MCF 10A (cell line): ENCODE measurements at regions of chr12 and their contacts with region 1.

Region 1: DNA sequence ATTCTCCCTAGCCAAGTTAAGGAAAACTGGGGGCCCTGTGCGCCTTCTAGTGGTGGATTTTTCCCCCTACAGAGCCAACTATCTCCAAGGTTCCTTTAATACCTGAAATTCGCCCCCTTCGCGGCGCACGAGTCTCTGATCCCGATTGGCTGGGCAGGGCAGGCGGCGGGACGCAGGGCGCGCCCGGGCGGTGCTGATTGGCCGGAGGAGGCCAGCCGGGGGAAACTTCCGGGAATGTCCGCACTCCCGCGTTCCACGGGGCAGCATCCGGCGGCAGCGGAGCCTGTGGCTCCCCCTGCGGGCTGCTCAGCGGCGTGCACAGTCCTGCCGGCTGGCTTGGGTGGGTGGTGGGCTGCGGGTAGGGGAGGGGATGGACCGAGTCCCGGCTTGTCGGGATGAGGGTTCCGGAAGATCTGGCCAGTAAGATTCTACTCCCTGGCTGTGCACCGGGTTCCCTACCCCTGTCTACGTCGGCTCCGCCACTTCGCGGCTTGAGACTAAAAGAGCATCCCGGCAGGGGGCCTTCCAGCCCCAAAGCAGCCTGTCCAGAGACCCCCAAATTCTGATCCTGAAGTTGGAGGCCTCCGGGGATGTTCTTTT is at the start of gene NABP2:
- DNase-seq: peak; percentile 98
- H3K4me3 Mint-ChIP-seq: peak within 1 kb of the TSS; percentile 82
- H3K27ac Mint-ChIP-seq: peak within 1 kb of the TSS; percentile 88
- H3K4me1 Mint-ChIP-seq: peaks cover 24% of the 10 kb centered on the region
- H3K27me3 Mint-ChIP-seq: no peaks in the 10 kb centered on the region
- CTCF ChIP-seq: peak; percentile 78
- total RNA-seq, gene NABP2: 53.3 and 56.2 TPM in 2 replicates

Region 2: DNA sequence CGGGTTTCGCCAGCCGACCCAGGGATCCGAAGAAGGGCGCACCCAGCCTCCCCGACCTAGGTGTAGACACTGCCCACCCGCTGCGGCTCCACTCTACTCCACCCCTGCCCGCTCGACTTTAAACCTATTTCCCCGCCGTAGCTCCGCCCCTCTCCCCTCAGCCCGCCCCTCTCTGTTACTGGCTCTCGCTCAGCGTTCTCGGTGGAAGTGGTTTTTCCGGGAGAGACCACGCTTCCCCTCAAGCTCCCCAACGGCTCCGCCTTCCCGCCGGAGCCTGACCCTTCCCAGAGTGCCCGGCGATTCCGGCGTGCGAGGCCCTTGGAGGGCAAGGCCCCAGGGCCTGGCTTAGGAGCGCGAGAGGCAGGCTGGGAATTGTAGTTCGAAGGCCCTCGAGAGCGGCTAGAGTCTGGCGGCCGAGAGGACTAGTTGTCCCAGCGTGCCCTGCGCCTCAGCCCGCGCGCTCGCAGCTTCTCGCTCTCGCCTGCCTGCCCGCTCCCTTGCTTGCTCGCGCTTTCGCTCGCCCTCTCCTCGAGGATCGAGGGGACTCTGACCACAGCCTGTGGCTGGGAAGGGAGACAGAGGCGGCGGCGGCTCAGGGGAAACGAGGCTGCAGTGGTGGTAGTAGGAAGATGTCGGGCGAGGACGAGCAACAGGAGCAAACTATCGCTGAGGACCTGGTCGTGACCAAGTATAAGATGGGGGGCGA is 119.9 kb before region 1 on chr12 and contains the start of gene PA2G4:
- CTCF ChIA-PET with region 1: interaction called, 5 read pairs
- POLR2A ChIA-PET with region 1: interaction called, 18 read pairs
- intact Hi-C with region 1: no loop called
- DNase-seq: peak; percentile 99
- H3K4me3 Mint-ChIP-seq: peak within 1 kb of the TSS; percentile 97
- H3K27ac Mint-ChIP-seq: peak within 1 kb of the TSS; percentile 95
- H3K4me1 Mint-ChIP-seq: peaks cover 9% of the 10 kb centered on the region
- H3K27me3 Mint-ChIP-seq: no peaks in the 10 kb centered on the region
- CTCF ChIP-seq: no peak
- total RNA-seq, gene PA2G4: 158 and 205 TPM in 2 replicates

Region 3: GRCh38 chr12:56158029-56158925 is 65.9 kb before region 1 on chr12 and contains the start of gene MYL6:
- CTCF ChIA-PET with region 1: interaction called, 3 read pairs
- POLR2A ChIA-PET with region 1: interaction called, 21 read pairs
- intact Hi-C with region 1: no loop called
- DNase-seq: peak; percentile 98
- H3K4me3 Mint-ChIP-seq: peak within 1 kb of the TSS; percentile 97
- H3K27ac Mint-ChIP-seq: peak within 1 kb of the TSS; percentile 100
- H3K4me1 Mint-ChIP-seq: peaks cover 35% of the 10 kb centered on the region
- H3K27me3 Mint-ChIP-seq: no peaks in the 10 kb centered on the region
- CTCF ChIP-seq: no peak
- total RNA-seq, gene MYL6: 716 and 997 TPM in 2 replicates

Region 4: GRCh38 chr12:56206457-56207166 is 17.6 kb before region 1 on chr12:
- CTCF ChIA-PET with region 1: interaction called, 36 read pairs
- POLR2A ChIA-PET with region 1: interaction called, 25 read pairs
- intact Hi-C with region 1: no loop called
- DNase-seq: peak; percentile 54
- H3K4me3 Mint-ChIP-seq: no peak overlapping the region
- H3K27ac Mint-ChIP-seq: no peak overlapping the region
- H3K4me1 Mint-ChIP-seq: peaks cover 5% of the 10 kb centered on the region
- H3K27me3 Mint-ChIP-seq: no peaks in the 10 kb centered on the region
- CTCF ChIP-seq: peak; percentile 28

Region 5: DNA sequence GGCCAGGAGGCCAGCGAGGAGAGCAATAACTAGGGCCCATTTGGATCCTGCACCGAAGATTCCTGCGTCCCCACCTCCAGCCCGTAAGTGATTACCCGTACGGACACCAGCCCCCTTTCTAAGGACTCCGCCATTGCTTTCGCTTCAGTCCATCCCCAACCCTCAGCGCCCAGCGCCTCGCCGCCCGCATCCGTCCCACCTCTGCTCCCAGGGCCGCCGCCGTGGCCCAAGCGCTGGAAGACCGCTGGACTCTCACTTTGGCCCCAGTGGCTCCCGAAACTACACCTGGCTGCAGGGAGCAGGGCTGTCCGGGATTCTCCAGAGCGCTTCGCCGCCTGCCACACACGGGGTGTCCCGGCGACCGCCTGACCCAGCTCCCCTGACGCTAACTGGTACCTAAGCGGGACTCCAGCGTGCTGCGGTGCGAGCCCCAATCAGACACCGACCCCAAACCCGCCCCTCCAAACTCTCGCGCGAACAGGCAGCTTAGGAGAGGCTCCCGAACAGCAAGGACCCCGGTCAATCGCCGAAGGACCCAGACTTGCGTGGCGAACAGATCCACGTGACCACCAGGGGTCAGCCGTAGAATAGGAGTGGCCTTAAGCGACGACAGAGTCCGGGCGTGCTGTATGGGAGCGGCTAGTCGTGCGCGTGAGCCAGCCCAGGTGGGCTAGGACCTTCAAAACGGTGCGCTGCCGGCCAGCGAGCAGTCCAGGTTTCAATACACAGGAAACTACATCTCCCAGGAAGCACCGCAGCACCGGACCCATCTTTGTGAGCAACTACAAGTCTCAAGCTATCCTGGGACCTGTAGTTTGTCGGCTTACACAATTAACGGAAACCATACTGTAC is 91.6 kb after region 1 on chr12 and contains the start of gene CNPY2:
- CTCF ChIA-PET with region 1: interaction called, 4 read pairs
- POLR2A ChIA-PET with region 1: interaction called, 23 read pairs
- intact Hi-C with region 1: no loop called
- DNase-seq: peak; percentile 99
- H3K4me3 Mint-ChIP-seq: peak within 1 kb of the TSS; percentile 96
- H3K27ac Mint-ChIP-seq: peak within 1 kb of the TSS; percentile 98
- H3K4me1 Mint-ChIP-seq: no peaks in the 10 kb centered on the region
- H3K27me3 Mint-ChIP-seq: no peaks in the 10 kb centered on the region
- CTCF ChIP-seq: no peak
- total RNA-seq, gene CNPY2: 169 and 210 TPM in 2 replicates